AG04450 (cell line): ENCODE measurements at regions of chr5 and their contacts with region 1.

Region 1: DNA sequence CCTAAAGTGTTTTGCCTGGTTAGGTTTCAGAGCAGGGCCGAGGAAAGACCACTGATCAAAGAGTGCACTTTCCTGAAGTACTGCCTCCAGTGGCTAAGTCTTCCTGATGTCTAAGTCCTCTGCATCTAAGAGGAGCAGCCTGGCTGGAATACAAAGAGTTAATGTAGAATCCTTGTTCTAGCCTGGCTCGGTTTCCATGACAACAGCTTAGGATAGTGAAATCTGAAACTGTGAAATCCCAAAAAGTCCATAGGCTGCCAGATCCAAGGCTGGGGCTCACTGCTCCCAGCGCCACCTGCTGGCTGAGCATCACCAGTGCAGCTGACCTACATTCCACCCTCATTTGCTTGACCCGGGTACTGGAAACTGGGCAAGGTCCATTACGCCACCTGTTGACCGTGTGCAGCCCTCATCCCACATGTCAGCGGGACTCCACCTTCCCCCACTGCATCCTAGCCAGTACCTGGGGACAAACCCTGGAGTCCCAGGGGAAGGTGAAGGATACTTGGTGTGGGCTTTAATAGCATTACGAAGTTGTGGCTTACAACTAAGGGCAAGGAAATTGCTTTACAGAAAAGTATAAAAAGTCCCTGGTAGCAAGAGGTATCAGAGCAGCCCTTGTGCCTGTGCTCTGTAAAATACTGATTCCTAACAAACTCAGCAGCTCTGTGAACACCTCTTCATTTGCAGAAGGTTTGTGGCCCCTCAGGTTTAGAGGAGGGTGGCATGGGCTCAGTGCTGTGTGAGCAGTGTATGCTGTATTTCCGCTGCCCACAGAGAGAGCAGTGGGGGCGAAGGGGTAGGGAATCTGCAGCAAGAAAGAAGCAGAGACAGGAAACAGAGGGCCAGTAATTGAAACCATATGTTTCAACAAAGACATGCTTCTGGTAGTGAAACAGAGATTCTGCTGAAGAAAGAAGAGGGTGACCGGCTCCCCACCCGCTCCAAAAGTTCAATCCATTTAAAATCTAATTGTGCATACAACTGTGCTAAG is 36.0 kb downstream of the PCDHGC5 start:
- DNase-seq: peak; percentile 95
- H3K4me3 ChIP-seq: peak overlapping the region; percentile 29
- H3K27ac ChIP-seq: peak overlapping the region; percentile 95
- H3K27me3 ChIP-seq: no peaks in the 10 kb centered on the region
- CTCF ChIP-seq: peak; percentile 99

Region 2: DNA sequence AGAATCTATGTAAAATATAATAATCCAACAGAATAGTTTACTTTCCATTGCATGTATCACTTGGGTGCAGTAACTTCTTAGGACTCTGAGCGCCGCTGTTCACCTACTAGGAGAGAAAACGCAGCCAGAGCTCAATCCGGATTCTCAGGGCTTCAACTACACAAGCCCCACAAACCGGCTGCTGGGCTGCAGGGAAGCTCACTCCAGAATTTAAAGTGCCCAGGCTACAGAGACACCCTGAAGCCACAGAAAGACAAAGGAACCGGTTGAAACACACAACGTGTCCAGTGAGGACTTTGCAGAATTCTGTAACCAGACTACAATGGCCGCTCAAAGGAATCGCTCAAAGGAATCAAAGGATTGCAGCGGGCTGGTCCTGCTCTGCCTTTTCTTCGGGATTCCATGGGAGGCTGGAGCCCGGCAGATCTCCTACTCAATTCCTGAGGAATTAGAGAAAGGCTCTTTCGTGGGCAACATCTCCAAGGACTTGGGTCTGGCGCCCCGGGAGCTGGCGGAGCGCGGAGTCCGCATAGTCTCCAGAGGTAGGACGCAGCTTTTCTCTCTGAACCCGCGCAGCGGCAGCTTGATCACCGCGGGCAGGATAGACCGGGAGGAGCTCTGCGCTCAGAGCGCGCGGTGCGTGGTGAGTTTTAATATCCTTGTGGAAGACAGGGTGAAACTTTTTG is 111.9 kb before region 1 on chr5 and contains the start of gene PCDHGA10:
- CTCF ChIA-PET with region 1: interaction called, 25 read pairs
- POLR2A ChIA-PET with region 1: interaction called, 3 read pairs
- DNase-seq: no peak
- H3K4me3 ChIP-seq: peak within 1 kb of the TSS; percentile 58
- H3K27ac ChIP-seq: peak within 1 kb of the TSS; percentile 52
- H3K27me3 ChIP-seq: no peaks in the 10 kb centered on the region
- CTCF ChIP-seq: peak; percentile 77
- polyA plus RNA-seq, gene PCDHGA10: 9.2 and 11.7 TPM in 2 replicates

Region 3: GRCh38 chr5:141420855-141421496 is 103.9 kb before region 1 on chr5 and contains the start of gene PCDHGA11:
- CTCF ChIA-PET with region 1: interaction called, 16 read pairs
- POLR2A ChIA-PET with region 1: no interaction called
- DNase-seq: no peak
- H3K4me3 ChIP-seq: peak within 1 kb of the TSS; percentile 50
- H3K27ac ChIP-seq: peak within 1 kb of the TSS; percentile 39
- H3K27me3 ChIP-seq: no peaks in the 10 kb centered on the region
- CTCF ChIP-seq: peak; percentile 54
- polyA plus RNA-seq, gene PCDHGA11: 7.5 and 7.7 TPM in 2 replicates

Region 4: DNA sequence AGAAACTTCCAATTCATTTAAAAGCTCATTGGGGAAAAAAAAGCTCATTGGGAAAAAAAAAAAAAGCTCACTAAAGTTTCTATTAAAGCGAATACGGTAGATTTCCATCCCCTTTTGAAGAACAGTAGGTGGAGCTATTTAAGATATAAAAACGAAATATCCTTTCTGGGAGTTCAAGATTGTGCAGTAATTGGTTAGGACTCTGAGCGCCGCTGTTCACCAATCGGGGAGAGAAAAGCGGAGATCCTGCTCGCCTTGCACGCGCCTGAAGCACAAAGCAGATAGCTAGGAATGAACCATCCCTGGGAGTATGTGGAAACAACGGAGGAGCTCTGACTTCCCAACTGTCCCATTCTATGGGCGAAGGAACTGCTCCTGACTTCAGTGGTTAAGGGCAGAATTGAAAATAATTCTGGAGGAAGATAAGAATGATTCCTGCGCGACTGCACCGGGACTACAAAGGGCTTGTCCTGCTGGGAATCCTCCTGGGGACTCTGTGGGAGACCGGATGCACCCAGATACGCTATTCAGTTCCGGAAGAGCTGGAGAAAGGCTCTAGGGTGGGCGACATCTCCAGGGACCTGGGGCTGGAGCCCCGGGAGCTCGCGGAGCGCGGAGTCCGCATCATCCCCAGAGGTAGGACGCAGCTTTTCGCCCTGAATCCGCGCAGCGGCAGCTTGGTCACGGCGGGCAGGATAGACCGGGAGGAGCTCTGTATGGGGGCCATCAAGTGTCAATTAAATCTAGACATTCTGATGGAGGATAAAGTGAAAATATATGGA is 94.4 kb before region 1 on chr5 and contains the start of gene PCDHGA12:
- CTCF ChIA-PET with region 1: interaction called, 16 read pairs
- POLR2A ChIA-PET with region 1: no interaction called
- DNase-seq: no peak
- H3K4me3 ChIP-seq: peak within 1 kb of the TSS; percentile 37
- H3K27ac ChIP-seq: peak within 1 kb of the TSS; percentile 52
- H3K27me3 ChIP-seq: no peaks in the 10 kb centered on the region
- CTCF ChIP-seq: peak; percentile 43; the same call in 1 of the 2 replicates
- polyA plus RNA-seq, gene PCDHGA12: 3.4 and 4.3 TPM in 2 replicates

Region 5: DNA sequence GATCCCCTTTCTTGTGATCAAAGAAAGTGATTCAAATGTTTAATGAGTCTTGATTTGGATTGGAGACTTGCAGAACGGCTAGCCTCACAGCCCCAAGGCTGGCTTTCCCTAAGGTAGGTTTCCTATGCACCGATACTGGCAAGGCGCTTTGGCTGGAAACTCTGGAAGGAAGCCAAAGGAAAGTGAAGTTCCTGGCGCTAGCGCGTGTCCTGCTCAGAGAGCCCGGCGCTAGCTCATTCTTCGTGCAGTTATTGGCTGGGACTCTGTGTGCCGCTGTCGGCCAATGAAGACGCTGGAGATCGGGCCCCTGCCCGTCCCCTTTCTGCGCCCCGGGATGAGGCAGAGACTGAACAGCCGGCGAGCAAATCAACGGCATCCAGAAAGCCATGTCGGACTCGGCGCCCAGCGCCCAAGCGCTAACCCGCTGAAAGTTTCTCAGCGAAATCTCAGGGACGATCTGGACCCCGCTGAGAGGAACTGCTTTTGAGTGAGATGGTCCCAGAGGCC is 49.2 kb before region 1 on chr5 and contains the start of gene PCDHGC3:
- CTCF ChIA-PET with region 1: interaction called, 21 read pairs
- POLR2A ChIA-PET with region 1: interaction called, 7 read pairs
- DNase-seq: peak; percentile 90
- H3K4me3 ChIP-seq: peak within 1 kb of the TSS; percentile 82
- H3K27ac ChIP-seq: peak within 1 kb of the TSS; percentile 81
- H3K27me3 ChIP-seq: no peaks in the 10 kb centered on the region
- CTCF ChIP-seq: peak; percentile 20
- polyA plus RNA-seq, gene PCDHGC3: 47.4 and 61.1 TPM in 2 replicates

Region 6: GRCh38 chr5:141512390-141512910 is 12.5 kb before region 1 on chr5:
- CTCF ChIA-PET with region 1: interaction called, 165 read pairs
- POLR2A ChIA-PET with region 1: interaction called, 40 read pairs
- DNase-seq: no peak
- H3K4me3 ChIP-seq: no peak overlapping the region
- H3K27ac ChIP-seq: peak overlapping the region; percentile 80
- H3K27me3 ChIP-seq: no peaks in the 10 kb centered on the region
- CTCF ChIP-seq: peak; percentile 83

Region 7: DNA sequence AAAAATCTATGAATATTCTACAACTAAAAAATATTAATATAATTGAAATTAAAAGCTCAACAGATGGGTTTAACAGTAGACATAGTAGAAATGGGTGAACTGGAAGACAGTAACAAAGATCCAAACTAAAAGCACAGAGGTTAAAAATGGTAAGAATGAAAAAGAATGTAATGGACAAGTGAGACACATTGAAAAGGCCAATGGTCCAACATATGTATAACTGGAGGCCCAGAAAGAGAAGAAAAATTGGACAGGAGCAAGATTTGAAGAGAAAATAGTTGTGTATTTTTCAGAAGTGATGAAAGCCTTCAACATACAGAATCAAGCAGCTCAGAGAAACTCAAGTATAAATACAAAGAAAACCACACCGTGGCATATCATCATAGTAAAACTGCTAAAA is 22.6 kb after region 1 on chr5:
- CTCF ChIA-PET with region 1: interaction called, 10 read pairs
- POLR2A ChIA-PET with region 1: no interaction called
- DNase-seq: no peak
- H3K4me3 ChIP-seq: no peak overlapping the region
- H3K27ac ChIP-seq: no peak overlapping the region
- H3K27me3 ChIP-seq: no peaks in the 10 kb centered on the region
- CTCF ChIP-seq: no peak